ENCODE measurements at regions of chr7 and their contacts with region 1.

Region 1: DNA sequence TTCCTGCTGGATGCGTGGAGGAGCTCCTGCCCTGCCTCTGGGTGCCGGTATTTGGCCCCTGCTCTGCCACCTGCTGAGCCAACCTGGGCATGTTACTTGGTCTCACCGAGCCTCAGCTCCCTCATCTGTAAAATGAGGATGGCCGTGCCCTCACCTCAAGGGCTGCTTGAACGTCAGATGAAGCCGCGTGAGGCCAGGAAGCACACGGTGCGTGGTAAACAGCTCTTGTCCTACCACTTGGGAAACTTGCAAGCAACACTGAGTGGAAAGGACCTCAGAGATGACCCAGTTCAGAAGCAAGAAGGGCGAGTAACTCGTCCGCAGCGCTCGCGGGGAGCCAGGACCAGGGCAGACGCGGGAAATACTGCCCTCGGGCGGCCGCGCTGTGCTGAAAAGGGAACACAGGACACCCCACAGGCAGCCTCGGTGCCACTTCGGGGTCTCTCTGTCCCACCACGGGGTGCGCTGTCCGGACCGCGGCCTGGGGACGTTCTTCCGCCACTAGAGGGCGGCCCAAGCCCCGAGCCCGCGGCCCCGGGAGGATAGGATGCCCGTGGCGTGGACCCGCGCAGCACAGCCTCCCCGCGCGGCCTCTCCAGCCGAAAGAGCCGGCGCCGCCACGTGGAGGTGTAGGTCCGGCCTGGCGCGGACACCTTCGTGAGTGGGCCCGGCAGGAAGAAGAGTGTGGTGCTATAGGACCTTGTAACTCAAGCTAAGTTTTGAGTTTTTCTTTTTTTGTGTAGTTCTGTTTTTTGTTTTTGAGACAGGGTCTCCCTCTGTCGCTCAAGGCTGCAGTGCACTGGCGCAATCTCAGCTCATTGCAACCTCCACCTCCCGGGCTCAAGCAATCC is 94.1 kb downstream of the PRKAG2 start:
- DNase-seq: peak; percentile 59
- H3K4me3 ChIP-seq: peak overlapping the region in 1 of 3 experiments; percentile 22
- H3K27ac ChIP-seq: no peak overlapping the region
- H3K4me1 ChIP-seq: peaks cover 4% of the 10 kb centered on the region
- H3K27me3 ChIP-seq: peaks cover 5 to 7% of the 10 kb centered on the region in 2 experiments
- CTCF ChIP-seq: peak; percentile 94 to 97
- POLR2A ChIP-seq: no peak

Region 2: DNA sequence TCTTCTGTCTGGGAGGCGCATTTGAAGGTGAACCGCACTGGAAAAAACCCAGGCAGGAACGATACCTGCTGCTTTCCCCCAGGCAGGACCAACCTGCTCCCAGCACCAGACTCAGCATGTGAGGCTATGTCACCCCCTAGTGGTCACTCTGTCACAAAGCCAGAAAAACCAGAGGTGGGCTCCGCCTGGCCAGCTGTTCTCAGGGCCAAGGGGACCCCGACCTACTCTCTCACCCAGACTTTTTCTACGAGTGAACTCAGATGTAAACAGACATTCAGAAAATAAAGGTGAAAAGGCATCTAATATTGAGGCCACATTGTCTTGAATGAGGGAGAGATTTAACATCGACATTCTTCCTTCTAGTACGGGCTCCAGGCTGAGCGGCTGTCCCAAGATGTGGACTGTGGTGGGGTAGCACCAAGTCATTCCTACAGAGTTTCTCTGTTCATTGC is 23.2 kb before region 1 on chr7:
- CTCF ChIA-PET with region 1: interaction called, 14 read pairs
- POLR2A ChIA-PET with region 1: no interaction called
- dilution Hi-C with region 1: no loop called
- intact Hi-C with region 1: no loop called
- DNase-seq: peak; percentile 60
- H3K4me3 ChIP-seq: no peak overlapping the region
- H3K27ac ChIP-seq: no peak overlapping the region
- H3K4me1 ChIP-seq: peaks cover 17% of the 10 kb centered on the region
- H3K27me3 ChIP-seq: peaks cover 0 to 1% of the 10 kb centered on the region in 2 experiments
- CTCF ChIP-seq: peak; percentile 80 to 86
- POLR2A ChIP-seq: no peak

Region 3: DNA sequence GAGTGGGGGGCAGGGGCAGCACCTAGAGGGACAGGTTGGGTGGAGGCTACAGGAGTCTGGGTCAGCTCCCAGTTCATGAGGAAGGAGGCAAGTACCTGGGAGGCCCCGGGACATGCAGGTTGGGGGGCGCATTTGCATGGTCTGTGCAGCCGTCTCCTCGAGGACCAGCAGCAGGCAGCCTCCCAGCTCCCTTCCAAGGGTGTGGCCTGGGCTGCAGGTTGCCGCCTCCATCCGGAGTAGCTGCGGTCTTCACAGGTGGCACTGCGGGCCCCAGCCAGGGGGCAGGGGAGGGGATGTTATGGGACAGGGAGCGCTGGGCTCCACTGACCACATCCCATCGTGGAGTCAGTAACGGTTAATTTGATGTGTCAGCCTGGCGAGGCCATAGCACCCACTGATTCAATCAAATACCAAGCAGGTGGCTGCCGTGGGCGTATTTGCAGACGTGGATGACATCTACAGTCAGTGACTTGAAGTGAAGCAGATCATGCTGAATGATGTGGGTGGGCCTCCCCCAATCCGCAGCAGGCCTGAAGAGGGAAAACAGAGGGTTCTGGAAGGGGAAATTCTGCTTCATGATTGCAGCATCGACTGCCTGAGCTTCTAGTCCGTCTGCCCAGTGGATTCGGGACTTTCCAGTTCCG is 12.5 kb after region 1 on chr7:
- CTCF ChIA-PET with region 1: interaction called, 51 read pairs
- POLR2A ChIA-PET with region 1: no interaction called
- dilution Hi-C with region 1: no loop called
- intact Hi-C with region 1: no loop called
- DNase-seq: no peak
- H3K4me3 ChIP-seq: no peak overlapping the region
- H3K27ac ChIP-seq: no peak overlapping the region
- H3K4me1 ChIP-seq: no peaks in the 10 kb centered on the region
- H3K27me3 ChIP-seq: no peaks in the 10 kb centered on the region
- CTCF ChIP-seq: no peak
- POLR2A ChIP-seq: no peak

Region 4: GRCh38 chr7:151936207-151936606 is 153.4 kb after region 1 on chr7:
- CTCF ChIA-PET with region 1: interaction called, 7 read pairs
- POLR2A ChIA-PET with region 1: no interaction called
- dilution Hi-C with region 1: no loop called
- intact Hi-C with region 1: loop called (anchors 2 kb)
- DNase-seq: peak; percentile 17
- H3K4me3 ChIP-seq: no peak overlapping the region
- H3K27ac ChIP-seq: no peak overlapping the region
- H3K4me1 ChIP-seq: peaks cover 4% of the 10 kb centered on the region
- H3K27me3 ChIP-seq: peaks cover 8 to 10% of the 10 kb centered on the region in 2 experiments
- CTCF ChIP-seq: no peak
- POLR2A ChIP-seq: no peak

Region 5: DNA sequence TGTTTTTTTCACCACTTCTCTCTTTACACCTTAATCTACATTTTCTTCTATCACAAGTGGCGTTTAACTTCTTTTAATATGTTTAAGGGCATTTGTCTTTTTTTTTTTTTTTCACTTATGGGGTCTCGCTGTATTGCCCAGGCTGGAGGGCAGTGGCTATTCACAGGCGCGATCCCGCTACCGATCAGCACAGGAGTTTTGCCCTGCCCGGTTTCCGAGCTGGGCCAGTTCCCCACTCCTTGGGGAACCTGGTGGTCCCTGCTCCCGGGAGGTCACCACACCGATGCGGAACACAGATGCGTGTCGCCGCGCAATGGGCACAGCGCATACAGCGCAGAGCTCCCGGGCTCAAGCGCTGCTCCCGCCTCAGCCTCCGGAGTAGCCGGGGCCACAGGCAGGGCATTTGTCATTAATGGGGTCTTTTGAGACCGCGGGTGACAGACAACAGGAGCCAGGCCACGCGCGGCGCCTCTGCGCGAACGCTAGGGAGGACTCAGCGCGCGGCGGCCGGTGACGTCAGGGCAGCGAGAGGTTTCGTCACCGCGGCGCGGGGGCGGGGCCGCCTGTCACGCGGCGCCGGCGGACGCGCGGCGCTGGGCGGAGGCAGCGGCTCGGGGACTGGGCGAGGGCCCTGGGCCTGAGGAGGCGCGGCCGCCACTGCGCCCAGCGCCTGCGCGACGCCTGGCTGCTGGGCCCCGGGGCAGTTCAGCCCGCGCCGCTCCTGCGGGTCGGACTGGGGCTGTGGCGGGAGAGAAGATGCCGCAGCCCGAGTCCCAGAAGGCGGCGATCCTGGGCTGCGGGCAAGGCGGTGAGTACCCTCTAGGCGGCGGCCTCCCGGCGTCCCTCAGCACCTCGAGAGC is 242.5 kb after region 1 on chr7 and contains the start of gene GALNT11:
- CTCF ChIA-PET with region 1: interaction called, 4 read pairs
- POLR2A ChIA-PET with region 1: no interaction called
- dilution Hi-C with region 1: no loop called
- intact Hi-C with region 1: loop called (anchors 1 kb)
- DNase-seq: peak; percentile 84
- H3K4me3 ChIP-seq: peak within 1 kb of the TSS; percentile 76 to 80 (median 76)
- H3K27ac ChIP-seq: peak within 1 kb of the TSS; percentile 27
- H3K4me1 ChIP-seq: peaks cover 6% of the 10 kb centered on the region
- H3K27me3 ChIP-seq: peaks cover 0 to 2% of the 10 kb centered on the region in 2 experiments
- CTCF ChIP-seq: peak; percentile 8 to 52
- POLR2A ChIP-seq: peak; percentile 91
- total RNA-seq, gene GALNT11: 27.6 and 27.7 TPM in 2 replicates

Region 6: GRCh38 chr7:152709287-152710152 is 926.7 kb after region 1 on chr7:
- CTCF ChIA-PET with region 1: interaction called, 17 read pairs
- POLR2A ChIA-PET with region 1: no interaction called
- dilution Hi-C with region 1: no loop called
- intact Hi-C with region 1: no loop called
- DNase-seq: no peak
- H3K4me3 ChIP-seq: no peak overlapping the region
- H3K27ac ChIP-seq: no peak overlapping the region
- H3K4me1 ChIP-seq: no peaks in the 10 kb centered on the region
- H3K27me3 ChIP-seq: no peaks in the 10 kb centered on the region
- CTCF ChIP-seq: no peak
- POLR2A ChIP-seq: no peak

Measured in endothelial cell of umbilical vein (primary cell).